Activated CD8-positive, alpha-beta T cell treated with anti-CD3 and anti-CD28 coated beads for 36 hours (primary cell): ENCODE measurements at regions of chr1 and their contacts with region 1.

Region 1: DNA sequence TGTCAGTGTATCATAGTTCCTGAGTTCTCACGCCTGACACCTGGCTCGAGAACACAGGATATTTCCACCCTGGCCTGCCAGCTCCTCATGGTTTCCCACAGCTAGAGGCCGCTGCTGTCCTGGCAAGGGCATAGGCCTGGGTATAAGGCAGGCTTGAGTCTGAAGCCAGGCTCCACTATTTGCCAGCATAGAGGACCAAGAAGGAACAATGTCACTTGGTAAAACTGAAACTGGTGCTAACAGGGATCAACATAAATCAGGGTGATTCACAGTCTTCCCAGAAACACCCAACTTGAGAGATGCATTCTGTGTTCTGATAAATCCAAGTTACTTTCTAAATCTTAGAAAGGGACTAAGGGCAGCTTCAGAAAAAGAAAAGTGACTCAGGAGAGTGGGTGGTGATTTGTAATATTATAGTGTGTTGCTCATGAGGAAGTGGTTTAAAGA is 6.9 kb upstream of the S100A2 start:
- DNase-seq: peak; percentile 78
- ATAC-seq: peak; percentile 79
- H3K4me3 Mint-ChIP-seq: no peak overlapping the region
- H3K27ac Mint-ChIP-seq: peak overlapping the region; percentile 69
- H3K4me1 Mint-ChIP-seq: peaks cover 34% of the 10 kb centered on the region
- H3K27me3 Mint-ChIP-seq: peaks cover 8% of the 10 kb centered on the region
- CTCF ChIP-seq: peak; percentile 67

Region 2: GRCh38 chr1:153375511-153375910 is 197.1 kb before region 1 on chr1 and contains the start of gene S100A12:
- CTCF ChIA-PET with region 1: no interaction called
- POLR2A ChIA-PET with region 1: no interaction called
- intact Hi-C with region 1: no loop called
- DNase-seq: no peak
- ATAC-seq: no peak
- H3K4me3 Mint-ChIP-seq: no peak within 1 kb of the TSS
- H3K27ac Mint-ChIP-seq: no peak within 1 kb of the TSS
- H3K4me1 Mint-ChIP-seq: no peaks in the 10 kb centered on the region
- H3K27me3 Mint-ChIP-seq: peaks cover 9% of the 10 kb centered on the region
- CTCF ChIP-seq: no peak
- total RNA-seq, gene S100A12: not detected

Region 3: GRCh38 chr1:153520230-153520629 is 52.4 kb before region 1 on chr1:
- CTCF ChIA-PET with region 1: interaction called, 14 read pairs
- POLR2A ChIA-PET with region 1: no interaction called
- intact Hi-C with region 1: no loop called
- DNase-seq: no peak
- ATAC-seq: no peak
- H3K4me3 Mint-ChIP-seq: no peak overlapping the region
- H3K27ac Mint-ChIP-seq: no peak overlapping the region
- H3K4me1 Mint-ChIP-seq: peaks cover 7% of the 10 kb centered on the region
- H3K27me3 Mint-ChIP-seq: no peaks in the 10 kb centered on the region
- CTCF ChIP-seq: no peak

Region 4: GRCh38 chr1:153545067-153546055 is 27.2 kb before region 1 on chr1 and contains the start of gene S100A4:
- CTCF ChIA-PET with region 1: interaction called, 24 read pairs
- POLR2A ChIA-PET with region 1: interaction called, 5 read pairs
- intact Hi-C with region 1: no loop called
- DNase-seq: peak; percentile 97
- ATAC-seq: peak; percentile 84
- H3K4me3 Mint-ChIP-seq: peak within 1 kb of the TSS; percentile 90
- H3K27ac Mint-ChIP-seq: peak within 1 kb of the TSS; percentile 99
- H3K4me1 Mint-ChIP-seq: peaks cover 67% of the 10 kb centered on the region
- H3K27me3 Mint-ChIP-seq: no peaks in the 10 kb centered on the region
- CTCF ChIP-seq: no peak
- total RNA-seq, gene S100A4: 109 to 118 TPM

Region 5: GRCh38 chr1:153617675-153618074 is 45.1 kb after region 1 on chr1:
- CTCF ChIA-PET with region 1: interaction called, 17 read pairs
- POLR2A ChIA-PET with region 1: interaction called, 4 read pairs
- intact Hi-C with region 1: no loop called
- DNase-seq: peak; percentile 87
- ATAC-seq: peak; percentile 96
- H3K4me3 Mint-ChIP-seq: no peak overlapping the region
- H3K27ac Mint-ChIP-seq: no peak overlapping the region
- H3K4me1 Mint-ChIP-seq: peaks cover 5% of the 10 kb centered on the region
- H3K27me3 Mint-ChIP-seq: no peaks in the 10 kb centered on the region
- CTCF ChIP-seq: peak; percentile 73

Region 6: DNA sequence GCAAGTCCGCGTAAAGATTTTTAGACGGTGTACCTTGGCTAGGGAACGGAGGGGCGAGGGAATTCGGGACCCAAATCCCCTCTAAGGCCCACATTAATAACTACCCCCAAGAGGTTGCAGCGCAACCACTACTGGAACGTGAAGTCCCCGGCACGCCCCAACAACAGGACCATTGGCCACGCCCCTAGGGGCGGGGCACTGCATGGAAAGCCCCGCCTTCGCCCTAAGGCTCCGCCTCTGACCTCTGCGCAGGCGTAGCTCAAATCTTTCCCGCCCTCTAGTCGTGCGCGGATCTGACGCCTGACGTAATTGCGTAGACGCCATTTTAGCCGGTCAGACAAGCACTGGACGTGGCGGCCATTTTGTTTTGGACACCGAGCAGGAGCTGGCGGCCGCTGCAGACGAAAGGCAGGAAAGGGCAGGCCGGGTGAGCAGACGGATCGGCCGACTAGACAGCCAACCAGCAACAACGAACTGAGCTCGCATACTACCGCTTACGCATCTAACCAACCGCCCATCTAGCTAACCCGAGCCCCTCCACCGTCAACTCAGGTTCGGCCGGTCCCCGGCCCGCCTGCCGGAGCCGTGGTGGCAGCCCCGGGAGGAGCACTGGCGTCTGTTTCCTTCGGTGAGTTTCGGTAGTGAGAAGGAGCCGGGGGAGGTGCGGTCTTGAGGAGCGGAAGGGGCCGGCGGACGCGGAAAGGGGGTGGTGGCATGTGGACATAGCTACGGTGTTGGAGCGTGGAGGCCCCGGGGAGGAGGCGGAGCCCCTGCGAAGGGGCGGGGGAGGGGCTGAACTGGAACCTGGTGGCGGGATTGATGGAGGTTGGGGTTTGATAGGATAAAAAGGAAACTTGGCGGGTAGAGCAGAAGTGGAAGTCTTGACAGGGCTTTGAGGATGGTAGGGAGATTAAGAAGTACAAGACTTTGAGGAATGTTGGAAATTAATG is 61.4 kb after region 1 on chr1 and contains the start of gene CHTOP:
- CTCF ChIA-PET with region 1: interaction called, 17 read pairs
- POLR2A ChIA-PET with region 1: interaction called, 5 read pairs
- intact Hi-C with region 1: no loop called
- DNase-seq: peak; percentile 98
- ATAC-seq: peak; percentile 95
- H3K4me3 Mint-ChIP-seq: peak within 1 kb of the TSS; percentile 100
- H3K27ac Mint-ChIP-seq: peak within 1 kb of the TSS; percentile 99
- H3K4me1 Mint-ChIP-seq: peaks cover 45% of the 10 kb centered on the region
- H3K27me3 Mint-ChIP-seq: no peaks in the 10 kb centered on the region
- CTCF ChIP-seq: no peak
- total RNA-seq, gene CHTOP: 76.8 to 83.2 TPM